ENCODE measurements at regions of chr2 and their contacts with region 1.

Region 1: DNA sequence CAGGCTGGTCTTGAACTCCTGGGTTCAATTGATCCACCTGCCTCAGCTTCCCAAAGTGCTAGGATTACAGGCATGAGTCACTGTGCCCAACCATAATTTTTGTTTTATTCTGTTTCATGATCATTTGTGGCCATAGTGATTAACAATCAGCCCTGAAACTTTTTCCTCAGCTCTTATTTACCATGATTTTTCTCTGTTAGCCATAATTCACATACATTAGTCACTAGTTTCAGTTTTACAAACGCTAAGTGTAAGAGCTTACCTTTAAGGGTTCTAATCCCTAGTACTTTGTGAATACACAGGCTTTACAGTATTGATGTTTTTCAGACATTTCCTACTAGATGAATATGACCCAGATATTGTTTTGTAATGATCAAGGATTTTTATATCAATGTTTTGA is 216.1 kb downstream of the DPP4 start:
- DNase-seq: peak; percentile 14
- H3K4me3 Mint-ChIP-seq: no peak overlapping the region
- H3K27ac Mint-ChIP-seq: no peak overlapping the region
- H3K4me1 Mint-ChIP-seq: peaks cover 4% of the 10 kb centered on the region
- H3K27me3 Mint-ChIP-seq: no peaks in the 10 kb centered on the region

Region 2: GRCh38 chr2:161847910-161848309 is 10.0 kb before region 1 on chr2:
- CTCF ChIA-PET with region 1: no interaction called
- intact Hi-C with region 1: loop called (anchors 1 kb)
- DNase-seq: no peak
- H3K4me3 Mint-ChIP-seq: no peak overlapping the region
- H3K27ac Mint-ChIP-seq: no peak overlapping the region
- H3K4me1 Mint-ChIP-seq: peaks cover 12% of the 10 kb centered on the region
- H3K27me3 Mint-ChIP-seq: no peaks in the 10 kb centered on the region

Region 3: GRCh38 chr2:161905389-161906046 is 47.6 kb after region 1 on chr2:
- CTCF ChIA-PET with region 1: no interaction called
- intact Hi-C with region 1: loop called (anchors 2 kb)
- DNase-seq: peak; percentile 50
- H3K4me3 Mint-ChIP-seq: no peak overlapping the region
- H3K27ac Mint-ChIP-seq: peak overlapping the region; percentile 57
- H3K4me1 Mint-ChIP-seq: peaks cover 6% of the 10 kb centered on the region
- H3K27me3 Mint-ChIP-seq: no peaks in the 10 kb centered on the region

Measured in activated naive CD4-positive, alpha-beta T cell treated with anti-CD3 and anti-CD28 coated beads for 36 hours (primary cell).